Posterior vena cava (tissue), 2 donors: ENCODE measurements at regions of chr20 and their contacts with region 1.

Region 1: DNA sequence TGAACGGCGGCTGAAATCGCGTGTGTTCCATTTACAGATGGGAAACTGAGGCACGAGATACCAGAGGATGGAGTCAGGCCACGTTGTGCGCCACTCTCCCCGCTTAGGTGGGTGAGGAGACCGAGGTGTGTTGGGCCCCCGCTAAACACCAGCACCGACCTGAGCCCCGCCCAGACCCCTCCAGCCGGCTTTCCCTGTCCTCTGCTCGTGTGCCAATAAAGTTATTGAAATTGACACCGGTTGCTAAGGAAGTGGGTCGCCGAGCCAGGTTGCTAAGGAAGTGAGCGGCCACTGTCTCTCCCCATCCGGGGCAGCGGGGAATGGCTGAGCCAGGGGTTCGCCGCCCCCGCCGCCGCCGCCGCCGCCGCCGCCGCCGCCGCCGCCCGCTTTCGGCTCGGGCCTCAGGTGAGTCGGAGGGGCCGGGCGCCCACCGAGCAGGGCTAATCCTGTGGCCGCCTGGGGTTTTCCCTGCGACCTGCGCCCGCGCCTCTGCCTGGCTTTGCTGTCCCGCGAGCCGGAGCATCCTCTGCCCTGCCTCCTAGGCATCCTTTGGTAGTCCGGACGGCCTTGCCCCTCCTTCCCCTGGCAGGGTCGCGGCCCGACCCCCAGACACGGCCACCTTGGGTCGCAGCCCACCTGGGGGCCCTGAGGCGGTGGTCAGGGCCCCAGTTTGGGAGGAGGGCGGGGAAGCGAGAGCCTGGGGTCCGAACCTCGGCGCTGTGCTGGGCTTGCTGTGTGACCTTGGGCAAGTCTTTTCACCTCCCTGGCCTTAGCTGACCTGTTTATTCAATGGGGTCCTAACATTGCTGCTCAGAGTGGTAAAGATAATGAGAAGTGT is at the start of gene KIF3B:
- DNase-seq: peak; percentile 96
- total RNA-seq, gene KIF3B: 26.2 to 28.8 TPM

Region 2: GRCh38 chr20:32263398-32263954 is 14.1 kb before region 1 on chr20:
- intact Hi-C with region 1: loop called in 1 of 2 experiments (anchors 1 kb)
- DNase-seq: no peak

Region 3: DNA sequence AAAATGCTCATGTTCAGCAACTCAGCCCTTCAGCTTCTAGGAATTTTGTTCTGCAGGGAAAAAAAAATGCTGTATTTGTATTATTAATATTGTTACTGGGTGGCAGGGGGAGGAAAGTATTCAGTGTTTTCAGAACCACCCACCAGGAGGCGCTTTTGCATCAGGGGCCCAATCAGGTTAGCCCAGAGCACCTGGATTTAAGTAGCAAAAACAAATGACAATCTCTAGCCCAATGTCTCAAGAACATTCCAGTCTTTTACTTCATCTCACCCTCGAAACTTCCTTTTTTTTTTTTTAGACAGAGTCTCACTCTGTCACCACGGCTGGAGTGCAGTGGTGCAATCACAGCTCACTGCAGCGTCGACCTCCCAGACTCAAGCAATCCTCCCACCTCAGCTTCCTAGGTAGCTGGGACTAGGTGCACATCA is 396.8 kb after region 1 on chr20:
- intact Hi-C with region 1: no loop called
- DNase-seq: no peak